Endothelial cell of umbilical vein (primary cell): ENCODE measurements at regions of chr4 and their contacts with region 1.

Region 1: GRCh38 chr4:91123742-91124141 is 996.5 kb downstream of the CCSER1 start:
- DNase-seq: no peak
- H3K4me3 ChIP-seq: no peak overlapping the region
- H3K27ac ChIP-seq: no peak overlapping the region
- H3K4me1 ChIP-seq: no peaks in the 10 kb centered on the region
- H3K27me3 ChIP-seq: no peaks in the 10 kb centered on the region
- CTCF ChIP-seq: no peak
- POLR2A ChIP-seq: no peak

Region 2: DNA sequence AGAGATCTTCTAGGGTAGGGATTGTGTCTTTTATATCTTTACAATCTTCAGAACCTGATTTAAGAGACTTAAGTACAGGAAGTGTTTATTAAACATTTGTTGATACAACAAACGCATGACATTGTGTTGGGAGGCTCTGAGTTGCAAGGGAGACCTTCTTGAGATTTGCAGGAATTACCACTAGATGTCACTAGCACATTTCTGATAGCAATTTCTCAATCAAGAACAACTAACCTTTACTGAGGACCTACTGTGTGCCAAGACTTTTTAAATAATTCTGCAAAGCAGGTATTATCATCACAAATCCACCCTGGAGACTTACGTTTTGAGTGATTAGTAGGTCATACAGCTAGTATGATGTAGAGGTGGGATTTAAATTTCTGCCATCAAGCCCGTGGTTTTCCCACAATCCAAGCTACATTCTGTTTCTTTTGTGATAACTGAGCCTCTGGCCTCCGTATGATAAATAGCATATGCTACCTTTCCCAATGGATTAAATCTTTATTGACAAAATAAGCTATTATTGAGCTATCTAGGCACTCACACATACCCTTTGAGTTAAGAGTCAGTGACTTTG is 10.5 kb before region 1 on chr4:
- CTCF ChIA-PET with region 1: interaction called, 14 read pairs
- POLR2A ChIA-PET with region 1: no interaction called
- dilution Hi-C with region 1: no loop called
- intact Hi-C with region 1: no loop called
- DNase-seq: peak; percentile 53
- H3K4me3 ChIP-seq: no peak overlapping the region
- H3K27ac ChIP-seq: no peak overlapping the region
- H3K4me1 ChIP-seq: no peaks in the 10 kb centered on the region
- H3K27me3 ChIP-seq: no peaks in the 10 kb centered on the region
- CTCF ChIP-seq: peak; percentile 31 to 48
- POLR2A ChIP-seq: no peak